SK-N-SH (cell line): ENCODE measurements at regions of chr5 and their contacts with region 1.

Region 1: GRCh38 chr5:67246108-67246507 is 49.5 kb upstream of the CD180 start:
- DNase-seq: peak; percentile 34
- H3K4me3 ChIP-seq: no peak overlapping the region
- H3K27ac ChIP-seq: no peak overlapping the region
- H3K4me1 ChIP-seq: peaks cover 13 to 54% of the 10 kb centered on the region in 2 experiments
- H3K27me3 ChIP-seq: no peaks in the 10 kb centered on the region
- CTCF ChIP-seq: peak; percentile 84
- EP300 ChIP-seq: no peak
- RAD21 ChIP-seq: peak; percentile 93

Region 2: GRCh38 chr5:66633795-66634194 is 612.3 kb before region 1 on chr5:
- CTCF ChIA-PET with region 1: no interaction called
- POLR2A ChIA-PET with region 1: no interaction called
- DNase-seq: no peak
- H3K4me3 ChIP-seq: no peak overlapping the region
- H3K27ac ChIP-seq: no peak overlapping the region
- H3K4me1 ChIP-seq: no peaks in the 10 kb centered on the region
- H3K27me3 ChIP-seq: no peaks in the 10 kb centered on the region
- CTCF ChIP-seq: no peak
- EP300 ChIP-seq: no peak
- RAD21 ChIP-seq: no peak

Region 3: DNA sequence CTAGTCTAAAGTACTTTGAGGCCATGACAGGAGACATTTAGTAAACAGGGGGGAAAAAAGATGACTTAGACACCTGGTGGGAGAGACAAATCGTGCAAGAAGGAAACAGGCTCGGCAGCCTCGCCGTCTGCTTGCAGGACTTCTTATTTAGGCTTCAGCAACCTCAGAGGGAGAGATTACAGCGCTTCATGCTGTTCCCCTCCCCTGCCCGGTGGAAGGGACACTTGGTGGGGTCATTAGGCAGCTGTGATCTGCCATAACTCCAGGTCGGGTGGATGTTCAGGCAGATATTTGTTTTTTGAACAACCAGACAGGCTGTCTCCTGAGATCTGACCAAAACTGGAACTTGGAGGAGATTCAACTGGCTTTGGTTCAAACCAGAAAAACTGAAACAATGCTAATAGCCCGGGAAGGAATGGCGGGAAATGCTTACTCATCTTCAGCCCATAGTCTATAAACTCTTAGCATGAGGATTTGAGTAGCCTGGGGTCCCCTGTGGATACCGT is 11.4 kb before region 1 on chr5:
- CTCF ChIA-PET with region 1: interaction called, 17 read pairs
- POLR2A ChIA-PET with region 1: no interaction called
- DNase-seq: no peak
- H3K4me3 ChIP-seq: no peak overlapping the region
- H3K27ac ChIP-seq: peak overlapping the region; percentile 44 to 48
- H3K4me1 ChIP-seq: peaks cover 3 to 23% of the 10 kb centered on the region in 2 experiments; a peak in 2 of 4 replicates
- H3K27me3 ChIP-seq: no peaks in the 10 kb centered on the region
- CTCF ChIP-seq: no peak
- EP300 ChIP-seq: peak in 1 of 2 experiments; percentile 80; a peak in 2 of 4 replicates
- RAD21 ChIP-seq: no peak

Region 4: DNA sequence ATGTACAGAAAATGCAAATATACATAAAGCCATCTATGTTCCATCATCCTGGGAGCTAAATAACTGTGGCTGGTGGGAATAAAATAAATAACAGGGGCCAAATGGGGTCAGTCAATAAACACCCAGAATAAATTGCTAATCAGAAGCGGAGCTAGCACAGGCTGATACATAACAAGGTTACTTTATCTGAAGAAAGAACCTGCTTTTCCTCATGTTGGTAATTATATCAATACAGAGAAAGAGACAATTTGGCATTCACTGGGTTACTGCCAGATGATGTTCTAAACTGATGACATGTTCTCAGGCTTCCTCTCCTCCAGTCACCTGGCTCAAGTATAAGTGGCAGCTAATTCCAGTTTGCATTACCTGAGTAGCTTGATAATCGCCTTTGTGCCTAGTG is 95.4 kb after region 1 on chr5:
- CTCF ChIA-PET with region 1: interaction called, 15 read pairs
- POLR2A ChIA-PET with region 1: no interaction called
- DNase-seq: peak; percentile 42
- H3K4me3 ChIP-seq: no peak overlapping the region
- H3K27ac ChIP-seq: peak overlapping the region in 1 of 2 experiments; percentile 67; a peak in 2 of 4 replicates
- H3K4me1 ChIP-seq: peaks cover 0 to 23% of the 10 kb centered on the region in 2 experiments; a peak in 2 of 4 replicates
- H3K27me3 ChIP-seq: no peaks in the 10 kb centered on the region
- CTCF ChIP-seq: no peak
- EP300 ChIP-seq: peak in 1 of 2 experiments; percentile 96; a peak in 2 of 4 replicates
- RAD21 ChIP-seq: no peak

Region 5: GRCh38 chr5:68215208-68215897 is 969.2 kb after region 1 on chr5 and contains the start of gene PIK3R1:
- CTCF ChIA-PET with region 1: interaction called, 20 read pairs
- POLR2A ChIA-PET with region 1: interaction called, 3 read pairs
- DNase-seq: peak; percentile 96
- H3K4me3 ChIP-seq: peak within 1 kb of the TSS; percentile 78 to 95
- H3K27ac ChIP-seq: peak within 1 kb of the TSS; percentile 97
- H3K4me1 ChIP-seq: peaks cover 12 to 14% of the 10 kb centered on the region in 2 experiments; a peak in 3 of 4 replicates
- H3K27me3 ChIP-seq: no peaks in the 10 kb centered on the region
- CTCF ChIP-seq: peak; percentile 46
- EP300 ChIP-seq: peak; percentile 5 to 39; a peak in 1 of 4 replicates
- RAD21 ChIP-seq: no peak
- polyA plus RNA-seq, gene PIK3R1: 2.0 and 2.7 TPM in 2 replicates

Region 6: GRCh38 chr5:68258531-68258930 is 1012.4 kb after region 1 on chr5:
- CTCF ChIA-PET with region 1: interaction called, 80 read pairs
- POLR2A ChIA-PET with region 1: no interaction called
- DNase-seq: no peak
- H3K4me3 ChIP-seq: no peak overlapping the region
- H3K27ac ChIP-seq: peak overlapping the region in 1 of 2 experiments; percentile 71; a peak in 2 of 4 replicates
- H3K4me1 ChIP-seq: peaks cover 30 to 47% of the 10 kb centered on the region in 2 experiments; a peak in 3 of 4 replicates
- H3K27me3 ChIP-seq: no peaks in the 10 kb centered on the region
- CTCF ChIP-seq: no peak
- EP300 ChIP-seq: no peak; a peak in 1 of 4 replicates
- RAD21 ChIP-seq: no peak

Region 7: DNA sequence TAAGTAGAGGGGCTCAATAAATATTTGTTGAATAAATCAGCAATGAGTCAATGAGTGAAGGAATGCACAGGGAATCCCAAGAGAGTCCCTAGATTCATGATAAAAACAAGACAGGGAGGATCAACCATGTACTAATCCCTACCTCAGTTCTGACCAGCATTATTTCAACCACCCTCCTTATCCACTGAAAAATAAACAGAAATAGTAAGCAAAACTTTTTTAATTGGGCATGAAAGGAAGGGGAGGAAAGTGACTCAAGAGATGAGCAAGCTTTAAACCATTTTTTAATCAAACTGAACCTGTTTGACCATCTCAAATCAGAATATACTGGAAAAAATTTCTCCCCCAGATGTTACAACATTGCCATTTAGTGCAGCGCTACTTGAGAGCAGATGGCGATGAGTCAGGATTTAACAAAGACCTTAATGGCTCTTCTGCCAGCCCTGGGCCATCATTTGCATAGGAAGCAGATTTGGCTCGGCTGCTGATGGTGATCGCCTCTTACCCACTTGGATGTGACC is 1652.9 kb after region 1 on chr5:
- CTCF ChIA-PET with region 1: no interaction called
- POLR2A ChIA-PET with region 1: no interaction called
- DNase-seq: no peak
- H3K4me3 ChIP-seq: no peak overlapping the region
- H3K27ac ChIP-seq: no peak overlapping the region; a peak in 1 of 4 replicates
- H3K4me1 ChIP-seq: peaks cover 0 to 2% of the 10 kb centered on the region in 2 experiments; a peak in 1 of 4 replicates
- H3K27me3 ChIP-seq: no peaks in the 10 kb centered on the region
- CTCF ChIP-seq: no peak
- EP300 ChIP-seq: no peak
- RAD21 ChIP-seq: no peak